Activated B cell treated with CpG ODN at 0.5 μM for 24 hours (primary cell): ENCODE measurements at regions of chr18 and their contacts with region 1.

Region 1: DNA sequence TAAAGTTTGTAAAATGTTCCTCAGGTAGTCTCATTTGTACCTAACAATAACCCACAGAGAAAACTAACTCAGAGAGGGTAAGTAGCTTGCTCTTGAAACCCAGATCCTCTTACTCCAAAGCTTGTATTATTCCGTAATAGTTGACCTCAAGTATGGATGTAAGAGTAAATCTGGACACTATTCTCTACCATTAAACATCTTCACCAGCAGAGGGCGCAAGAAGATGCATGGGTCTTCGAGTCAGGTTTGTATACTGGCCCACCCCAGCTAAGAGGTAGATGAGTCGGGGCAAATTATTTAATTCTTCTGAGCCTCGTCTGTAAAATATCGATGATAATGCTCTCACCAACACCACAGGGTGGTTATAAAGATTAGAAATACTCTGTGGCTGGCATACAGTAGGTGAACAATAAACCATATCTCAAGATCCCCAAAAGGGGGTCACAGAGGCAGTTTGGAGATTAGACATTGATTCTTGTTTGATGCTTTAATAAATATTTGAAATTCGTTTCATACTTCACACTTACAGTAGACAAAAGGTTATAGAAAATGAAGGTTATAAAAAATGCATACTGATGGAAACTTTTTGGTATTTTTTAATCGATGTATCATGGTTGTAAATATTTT is 3.5 kb upstream of the CABLES1 start:
- DNase-seq: no peak
- ATAC-seq: peak; percentile 35
- H3K4me3 Mint-ChIP-seq: no peak overlapping the region
- H3K27ac Mint-ChIP-seq: no peak overlapping the region
- H3K4me1 Mint-ChIP-seq: peaks cover 27% of the 10 kb centered on the region
- H3K27me3 Mint-ChIP-seq: peaks cover 9% of the 10 kb centered on the region
- CTCF ChIP-seq: peak; percentile 72

Region 2: DNA sequence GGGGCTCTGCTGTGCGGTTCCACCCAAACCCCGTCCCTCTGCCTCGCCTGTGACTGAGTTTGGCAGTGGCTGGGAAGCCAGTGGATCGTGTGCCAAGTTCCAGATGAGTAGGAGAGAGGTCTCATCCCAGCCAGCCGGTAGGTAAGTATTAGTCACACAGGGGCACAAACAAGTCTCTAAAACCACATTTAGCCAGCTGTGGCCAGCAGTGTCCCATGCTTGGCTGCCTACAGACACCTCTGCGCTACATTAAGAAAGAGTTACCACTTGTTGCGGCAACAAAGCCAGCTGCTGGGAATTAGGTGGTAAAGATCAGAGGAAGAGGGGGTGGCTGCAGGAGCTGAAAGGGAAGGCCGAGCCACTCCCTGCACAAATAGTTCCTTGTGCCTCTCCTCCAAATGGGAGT is 881.2 kb before region 1 on chr18:
- CTCF ChIA-PET with region 1: no interaction called
- POLR2A ChIA-PET with region 1: no interaction called
- intact Hi-C with region 1: no loop called
- DNase-seq: no peak
- ATAC-seq: no peak
- H3K4me3 Mint-ChIP-seq: no peak overlapping the region
- H3K27ac Mint-ChIP-seq: no peak overlapping the region
- H3K4me1 Mint-ChIP-seq: no peaks in the 10 kb centered on the region
- H3K27me3 Mint-ChIP-seq: peaks cover 5% of the 10 kb centered on the region
- CTCF ChIP-seq: no peak

Region 3: DNA sequence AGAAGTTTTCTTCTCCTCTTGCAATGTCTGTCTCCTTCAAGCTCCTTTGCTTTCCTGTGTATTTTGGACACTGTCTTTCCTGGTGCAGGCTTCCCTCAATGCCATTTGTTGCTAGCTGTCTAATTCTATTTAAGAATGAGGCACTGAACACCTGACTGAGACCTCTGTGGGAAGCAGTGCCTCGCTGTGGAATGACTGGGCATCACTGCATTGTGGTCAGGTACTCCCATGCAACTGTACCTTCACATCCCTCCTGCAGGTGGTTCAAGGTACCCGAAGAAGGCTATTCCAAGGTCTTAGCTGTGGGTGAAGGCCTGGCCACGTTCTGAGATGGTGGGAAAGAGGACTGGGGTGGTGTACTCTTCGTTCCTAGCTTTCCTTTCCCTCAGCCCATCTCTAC is 561.3 kb before region 1 on chr18:
- CTCF ChIA-PET with region 1: no interaction called
- POLR2A ChIA-PET with region 1: no interaction called
- intact Hi-C with region 1: no loop called
- DNase-seq: no peak
- ATAC-seq: no peak
- H3K4me3 Mint-ChIP-seq: no peak overlapping the region
- H3K27ac Mint-ChIP-seq: no peak overlapping the region
- H3K4me1 Mint-ChIP-seq: no peaks in the 10 kb centered on the region
- H3K27me3 Mint-ChIP-seq: no peaks in the 10 kb centered on the region
- CTCF ChIP-seq: no peak

Region 4: GRCh38 chr18:22933206-22933957 is 198.4 kb before region 1 on chr18 and contains the start of gene RBBP8:
- CTCF ChIA-PET with region 1: interaction called, 3 read pairs
- POLR2A ChIA-PET with region 1: interaction called, 5 read pairs
- intact Hi-C with region 1: loop called (anchors 1 kb)
- DNase-seq: peak; percentile 92
- ATAC-seq: peak; percentile 85
- H3K4me3 Mint-ChIP-seq: peak within 1 kb of the TSS; percentile 94
- H3K27ac Mint-ChIP-seq: peak within 1 kb of the TSS; percentile 96
- H3K4me1 Mint-ChIP-seq: peaks cover 28% of the 10 kb centered on the region
- H3K27me3 Mint-ChIP-seq: no peaks in the 10 kb centered on the region
- CTCF ChIP-seq: no peak
- total RNA-seq, gene RBBP8: 29.1 and 29.3 TPM in 2 replicates

Region 5: DNA sequence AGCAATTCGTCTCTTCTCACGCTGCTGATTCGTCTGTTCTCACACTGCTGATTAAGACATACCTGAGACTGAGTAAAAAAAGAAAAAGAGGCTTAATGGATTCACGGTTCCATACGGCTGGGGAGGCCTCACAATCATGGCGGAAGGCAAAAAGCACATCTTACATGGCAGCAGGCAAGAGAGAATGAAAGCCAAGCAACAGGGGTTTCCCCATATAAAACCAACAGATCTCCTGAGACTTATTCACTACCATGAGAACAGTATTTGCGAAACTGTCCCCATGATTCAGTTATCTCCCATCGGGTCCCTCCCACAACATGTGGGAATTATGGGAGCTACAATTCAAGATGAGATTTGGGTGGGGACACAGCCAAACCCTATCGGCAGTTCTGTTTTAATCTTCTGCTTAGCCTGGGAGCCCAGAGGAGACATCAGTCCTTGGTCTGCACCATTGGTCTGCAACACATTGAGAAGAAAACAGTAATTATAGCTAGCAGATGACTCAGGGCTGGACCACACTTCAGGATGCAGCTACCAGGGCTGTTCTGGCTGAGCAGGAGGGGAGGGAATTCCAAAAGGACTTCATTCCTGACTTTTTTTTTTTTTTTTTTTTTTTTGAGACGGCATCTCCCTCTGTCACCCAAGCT is 72.9 kb after region 1 on chr18:
- CTCF ChIA-PET with region 1: no interaction called
- POLR2A ChIA-PET with region 1: interaction called, 10 read pairs
- intact Hi-C with region 1: no loop called
- DNase-seq: no peak
- ATAC-seq: peak; percentile 59
- H3K4me3 Mint-ChIP-seq: no peak overlapping the region
- H3K27ac Mint-ChIP-seq: peak overlapping the region; percentile 46
- H3K4me1 Mint-ChIP-seq: peaks cover 19% of the 10 kb centered on the region
- H3K27me3 Mint-ChIP-seq: peaks cover 12% of the 10 kb centered on the region
- CTCF ChIP-seq: no peak

Region 6: DNA sequence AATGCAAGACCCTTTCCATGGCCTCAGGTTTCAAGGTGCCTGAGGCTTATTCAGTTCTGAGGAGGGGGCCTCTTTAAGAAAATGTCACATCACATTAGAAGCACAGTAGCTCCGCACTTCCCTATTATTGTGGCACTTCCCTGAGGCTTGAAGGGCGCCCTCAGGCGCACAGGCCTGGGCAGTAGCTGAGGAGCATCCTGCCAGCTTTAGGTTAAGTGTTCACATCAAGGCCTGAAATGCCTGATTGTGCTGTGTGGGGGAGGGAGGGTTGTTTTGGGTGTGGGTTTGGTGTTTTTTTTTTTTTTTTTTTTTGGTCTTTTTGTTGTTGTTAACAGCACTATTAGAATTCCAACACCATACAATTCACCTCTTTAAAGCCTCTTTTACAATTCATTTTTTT is 111.4 kb after region 1 on chr18:
- CTCF ChIA-PET with region 1: interaction called, 11 read pairs
- POLR2A ChIA-PET with region 1: interaction called, 47 read pairs
- intact Hi-C with region 1: loop called (anchors 1 kb)
- DNase-seq: no peak
- ATAC-seq: no peak
- H3K4me3 Mint-ChIP-seq: no peak overlapping the region
- H3K27ac Mint-ChIP-seq: no peak overlapping the region
- H3K4me1 Mint-ChIP-seq: peaks cover 34% of the 10 kb centered on the region
- H3K27me3 Mint-ChIP-seq: no peaks in the 10 kb centered on the region
- CTCF ChIP-seq: no peak

Region 7: GRCh38 chr18:23377669-23378301 is 246.0 kb after region 1 on chr18:
- CTCF ChIA-PET with region 1: interaction called, 57 read pairs
- POLR2A ChIA-PET with region 1: interaction called, 6 read pairs
- intact Hi-C with region 1: loop called (anchors 1 kb)
- DNase-seq: no peak
- ATAC-seq: peak; percentile 50
- H3K4me3 Mint-ChIP-seq: no peak overlapping the region
- H3K27ac Mint-ChIP-seq: no peak overlapping the region
- H3K4me1 Mint-ChIP-seq: peaks cover 8% of the 10 kb centered on the region
- H3K27me3 Mint-ChIP-seq: no peaks in the 10 kb centered on the region
- CTCF ChIP-seq: no peak

Region 8: DNA sequence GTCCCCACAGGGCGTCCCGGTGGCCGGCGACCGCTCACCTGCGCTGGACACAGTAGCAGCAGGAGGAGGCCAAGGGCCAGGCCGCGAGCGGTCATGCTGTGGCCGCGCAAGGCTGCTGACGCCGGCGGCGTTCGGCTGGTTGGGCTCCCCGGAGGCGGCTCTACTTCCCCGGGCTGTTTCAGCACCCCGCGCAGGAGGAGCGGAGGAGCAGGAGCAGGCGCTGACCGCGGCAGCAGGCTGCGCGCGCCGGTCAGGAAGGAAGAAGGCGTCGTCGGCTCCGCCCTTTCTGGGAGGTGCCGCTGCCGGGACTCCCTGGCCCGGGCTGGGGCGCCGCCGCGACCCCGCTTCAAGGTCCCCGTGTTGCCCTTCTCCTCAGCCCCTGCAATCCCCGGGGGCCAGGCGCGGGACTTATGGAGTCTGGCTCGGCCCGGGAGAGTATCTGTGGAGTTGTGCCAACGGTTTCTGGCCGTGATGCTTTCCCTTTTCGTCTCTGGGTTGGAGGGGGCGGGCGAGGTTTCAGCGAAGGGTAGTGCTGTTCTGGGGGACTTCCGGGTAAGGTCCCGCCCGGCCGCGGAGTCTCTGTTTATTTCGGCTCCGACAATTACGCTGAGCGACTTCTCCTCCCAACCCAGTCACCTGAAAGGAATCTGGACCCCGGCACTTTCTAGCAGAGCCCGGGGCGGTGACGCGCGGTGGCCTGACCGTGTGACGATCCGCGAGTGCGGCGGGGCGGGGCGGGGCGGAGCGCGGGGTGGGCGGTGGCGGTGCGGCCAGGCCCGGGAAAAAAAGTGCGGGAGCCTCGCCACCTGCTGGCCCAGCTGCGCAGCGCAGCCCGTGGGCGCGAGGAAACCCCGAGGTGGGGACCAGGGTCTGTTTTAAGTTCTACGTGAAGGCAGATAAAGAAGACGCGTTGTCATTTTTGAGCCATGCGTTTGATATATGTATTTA is 454.7 kb after region 1 on chr18 and contains the start of gene NPC1:
- CTCF ChIA-PET with region 1: no interaction called
- POLR2A ChIA-PET with region 1: no interaction called
- intact Hi-C with region 1: loop called (anchors 1 kb)
- DNase-seq: peak; percentile 94
- ATAC-seq: peak; percentile 88
- H3K4me3 Mint-ChIP-seq: peak within 1 kb of the TSS; percentile 91
- H3K27ac Mint-ChIP-seq: peak within 1 kb of the TSS; percentile 95
- H3K4me1 Mint-ChIP-seq: peaks cover 31% of the 10 kb centered on the region
- H3K27me3 Mint-ChIP-seq: no peaks in the 10 kb centered on the region
- CTCF ChIP-seq: peak; percentile 39
- total RNA-seq, gene NPC1: 31.9 and 36.5 TPM in 2 replicates